PC-9 (cell line): ENCODE measurements at regions of chr7 and their contacts with region 1.

Region 1: DNA sequence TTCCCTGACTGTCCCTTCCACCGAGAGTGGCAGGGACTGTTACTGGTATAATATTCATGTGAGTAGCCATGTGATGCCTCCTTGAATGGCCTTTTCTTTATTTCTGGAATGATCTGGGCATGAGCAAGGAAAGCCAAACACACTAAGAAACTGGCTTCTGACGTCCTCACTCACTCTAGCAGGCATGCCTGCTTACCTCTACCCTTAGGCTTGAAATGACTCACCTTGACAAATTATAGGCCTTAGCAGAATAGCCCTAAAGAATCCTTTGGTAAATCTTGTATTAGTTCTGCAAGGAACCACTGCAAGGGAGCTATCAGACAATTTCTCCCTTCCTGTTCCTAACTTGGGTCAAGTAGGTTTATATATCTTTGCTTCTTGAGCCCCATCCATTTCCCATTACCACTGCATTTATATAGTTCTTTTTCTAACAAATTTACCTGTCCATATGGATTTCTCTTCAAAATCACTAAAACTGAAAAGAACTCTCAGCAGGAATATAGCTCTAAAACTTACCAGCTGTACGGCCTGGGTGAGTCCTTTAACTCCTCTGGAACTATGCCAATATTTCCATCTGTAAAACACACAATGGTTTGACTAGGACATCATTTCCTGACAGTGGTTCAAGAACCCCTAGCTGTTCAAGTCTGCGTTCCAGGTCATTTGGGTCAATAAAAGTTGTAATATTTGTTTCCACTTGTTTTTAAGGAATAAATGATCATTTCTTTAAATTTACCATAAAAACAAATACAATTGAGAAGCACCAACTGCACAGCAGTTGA is 13.0 kb upstream of the NDUFA5 start:
- DNase-seq: peak in 1 of 2 experiments; percentile 43
- H3K4me3 ChIP-seq: no peak overlapping the region
- H3K27ac ChIP-seq: no peak overlapping the region
- H3K4me1 ChIP-seq: no peaks in the 10 kb centered on the region; the same call in 1 of the 2 replicates
- H3K27me3 ChIP-seq: no peaks in the 10 kb centered on the region
- CTCF ChIP-seq: no peak

Region 2: DNA sequence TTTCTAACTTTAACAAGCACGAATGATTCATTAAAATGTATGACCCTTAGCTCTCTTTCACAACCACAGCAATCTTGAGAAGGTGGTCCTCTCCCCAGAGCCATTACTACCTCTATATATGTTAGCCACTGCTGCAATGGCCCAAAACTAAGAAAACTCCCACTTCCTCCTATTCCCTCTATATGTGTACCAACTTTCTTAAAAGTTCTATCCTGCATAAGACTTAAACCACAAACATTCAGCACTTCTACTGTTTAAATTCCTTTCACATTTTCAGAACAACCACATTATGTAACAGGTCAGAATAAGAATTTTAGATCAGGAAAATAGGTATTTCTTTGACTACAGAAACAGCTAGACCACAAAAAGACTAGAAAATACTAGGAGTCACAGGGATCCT is 142.0 kb after region 1 on chr7:
- CTCF ChIA-PET with region 1: no interaction called
- POLR2A ChIA-PET with region 1: interaction called, 19 read pairs
- intact Hi-C with region 1: no loop called
- DNase-seq: peak in 1 of 2 experiments; percentile 52
- H3K4me3 ChIP-seq: no peak overlapping the region
- H3K27ac ChIP-seq: peak overlapping the region; percentile 29; the same call in 1 of the 2 replicates
- H3K4me1 ChIP-seq: peaks cover 26% of the 10 kb centered on the region
- H3K27me3 ChIP-seq: no peaks in the 10 kb centered on the region
- CTCF ChIP-seq: no peak